ENCODE measurements at regions of chr17 and their contacts with region 1.

Region 1: DNA sequence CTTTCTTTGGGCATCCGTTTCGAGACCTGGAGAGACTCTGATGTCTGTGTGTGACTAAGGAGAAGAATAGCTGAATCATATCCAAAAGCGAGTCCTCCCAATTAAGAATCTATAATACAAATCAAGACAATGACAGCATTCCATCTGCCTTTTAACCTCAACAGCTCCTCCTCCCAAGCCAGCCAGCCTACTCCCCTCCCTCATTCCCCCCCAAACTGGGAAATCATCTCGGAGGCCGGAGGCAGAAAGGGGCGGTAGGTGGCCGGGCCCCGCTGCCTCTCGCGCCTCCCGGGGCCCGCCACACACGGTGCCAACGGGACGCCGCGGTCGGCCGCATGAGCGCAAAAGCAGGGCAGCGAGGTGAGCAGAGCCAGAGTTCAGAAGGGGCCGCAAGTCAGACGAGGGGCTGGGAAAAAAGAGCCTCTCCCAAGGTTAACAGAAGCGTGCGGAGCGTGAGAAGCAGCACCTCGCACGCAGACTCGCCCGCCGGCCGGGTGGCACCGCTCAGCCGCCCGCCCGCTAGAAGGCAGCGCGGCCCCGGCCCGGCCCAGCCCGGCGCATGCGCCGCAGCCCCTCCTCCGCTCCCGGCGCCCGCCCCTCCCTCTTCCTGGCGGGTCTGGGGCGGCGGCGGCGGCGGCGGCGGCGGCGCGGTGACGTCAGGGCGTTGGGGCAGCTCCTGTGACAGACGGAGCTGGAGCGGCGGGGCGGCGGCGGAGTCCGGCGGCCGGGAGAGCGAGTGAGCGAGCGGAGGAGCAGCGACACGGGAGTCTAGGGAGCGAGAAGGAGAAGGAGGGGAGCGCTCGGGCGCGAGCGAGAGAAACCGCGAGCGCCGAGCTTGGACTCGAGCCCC is at the start of gene PAFAH1B1:
- DNase-seq: peak; percentile 98
- ATAC-seq: peak; percentile 75
- H3K4me3 ChIP-seq: peak within 1 kb of the TSS; percentile 83 to 98 (median 93)
- H3K4me3 Mint-ChIP-seq: peak within 1 kb of the TSS; percentile 95
- H3K27ac ChIP-seq: peak within 1 kb of the TSS; percentile 94 to 97
- H3K27ac Mint-ChIP-seq: peak within 1 kb of the TSS; percentile 97
- H3K4me1 ChIP-seq: peaks cover 30 to 34% of the 10 kb centered on the region in 2 donors
- H3K4me1 Mint-ChIP-seq: peaks cover 33% of the 10 kb centered on the region
- H3K27me3 ChIP-seq: no peaks in the 10 kb centered on the region
- H3K27me3 Mint-ChIP-seq: no peaks in the 10 kb centered on the region
- CTCF ChIP-seq: peak; percentile 31
- total RNA-seq, gene PAFAH1B1: 170 and 172 TPM in 2 replicates

Region 2: DNA sequence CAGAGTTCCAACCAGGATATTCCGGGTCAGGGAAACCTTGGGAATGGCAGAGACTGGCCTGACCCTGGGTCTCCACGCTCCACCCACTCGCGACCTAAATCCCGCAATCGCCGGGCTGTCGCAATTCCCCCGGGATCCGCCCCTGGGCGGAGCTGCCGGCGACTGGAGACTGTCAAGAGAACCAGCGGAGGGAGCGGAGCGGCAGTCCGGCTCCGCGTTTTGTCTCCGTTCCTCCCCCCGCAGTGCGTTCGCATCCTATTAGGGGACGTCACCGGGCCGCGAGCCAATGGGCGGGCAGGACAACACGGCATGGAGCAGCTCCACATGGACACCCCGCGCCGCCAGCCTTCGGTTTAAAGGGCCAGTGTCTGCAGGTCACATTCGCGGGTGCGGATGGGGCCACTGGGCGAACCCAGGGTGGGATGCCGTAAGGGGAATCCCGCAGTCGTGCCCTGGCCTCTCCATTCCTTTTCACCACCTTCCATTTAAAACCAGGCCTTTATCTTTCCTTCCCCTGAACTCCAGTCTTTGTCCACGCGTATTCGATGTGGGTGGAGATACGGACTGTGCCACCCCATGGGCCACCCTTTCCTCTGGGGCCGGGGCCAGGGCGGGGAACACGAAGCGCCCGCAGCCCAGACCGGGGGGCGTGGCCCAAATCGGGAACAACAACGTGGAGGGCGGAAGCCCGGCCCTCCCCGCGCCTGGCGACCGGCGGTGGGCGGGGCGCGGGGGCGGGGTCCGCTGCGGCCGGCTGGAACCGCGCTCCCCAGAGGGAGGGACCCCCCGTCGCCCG is 191.6 kb before region 1 on chr17:
- CTCF ChIA-PET with region 1: interaction called, 3 read pairs
- POLR2A ChIA-PET with region 1: no interaction called
- intact Hi-C with region 1: loop called (anchors 2 kb)
- DNase-seq: peak; percentile 96
- ATAC-seq: peak; percentile 57
- H3K4me3 ChIP-seq: peak overlapping the region; percentile 64 to 99 (median 94)
- H3K4me3 Mint-ChIP-seq: peak overlapping the region; percentile 99
- H3K27ac ChIP-seq: peak overlapping the region; percentile 95 to 98
- H3K27ac Mint-ChIP-seq: peak overlapping the region; percentile 99
- H3K4me1 ChIP-seq: peaks cover 32 to 36% of the 10 kb centered on the region in 2 donors
- H3K4me1 Mint-ChIP-seq: peaks cover 38% of the 10 kb centered on the region
- H3K27me3 ChIP-seq: no peaks in the 10 kb centered on the region
- H3K27me3 Mint-ChIP-seq: no peaks in the 10 kb centered on the region
- CTCF ChIP-seq: no peak

Region 3: GRCh38 chr17:2580661-2581060 is 12.5 kb before region 1 on chr17:
- CTCF ChIA-PET with region 1: no interaction called
- POLR2A ChIA-PET with region 1: no interaction called
- intact Hi-C with region 1: no loop called
- DNase-seq: no peak
- ATAC-seq: no peak
- H3K4me3 ChIP-seq: no peak overlapping the region
- H3K4me3 Mint-ChIP-seq: no peak overlapping the region
- H3K27ac ChIP-seq: no peak overlapping the region
- H3K27ac Mint-ChIP-seq: no peak overlapping the region
- H3K4me1 ChIP-seq: no peaks in the 10 kb centered on the region
- H3K4me1 Mint-ChIP-seq: no peaks in the 10 kb centered on the region
- H3K27me3 ChIP-seq: peaks cover 0 to 4% (median 0%) of the 10 kb centered on the region in 4 experiments
- H3K27me3 Mint-ChIP-seq: peaks cover 9% of the 10 kb centered on the region
- CTCF ChIP-seq: no peak

Region 4: DNA sequence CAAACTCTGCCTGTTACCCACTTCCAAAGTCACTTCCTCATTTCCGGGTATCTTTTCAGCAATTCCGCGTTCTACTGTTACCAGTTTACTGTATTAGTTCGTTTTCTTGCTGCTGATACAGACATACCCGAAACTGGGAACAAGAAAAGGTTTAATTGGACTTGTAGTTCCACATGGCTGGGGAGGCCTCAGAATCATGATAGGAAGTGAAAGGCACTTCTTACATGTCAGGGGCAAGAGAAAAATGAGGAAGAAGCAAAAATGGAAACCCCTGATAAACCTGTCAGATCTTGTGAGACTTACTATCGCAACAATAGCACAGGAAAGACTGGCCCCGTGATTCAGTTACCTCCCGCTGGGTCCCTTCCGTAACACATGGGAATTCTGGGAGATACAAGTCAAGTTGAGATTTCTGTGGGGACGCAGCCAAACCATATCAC is 31.1 kb after region 1 on chr17:
- CTCF ChIA-PET with region 1: no interaction called
- POLR2A ChIA-PET with region 1: interaction called, 3 read pairs
- intact Hi-C with region 1: loop called (anchors 2 kb)
- DNase-seq: peak; percentile 82
- ATAC-seq: peak; percentile 76
- H3K4me3 ChIP-seq: peak overlapping the region in 3 of 5 experiments; percentile 33 to 46 (median 37)
- H3K4me3 Mint-ChIP-seq: peak overlapping the region; percentile 85
- H3K27ac ChIP-seq: peak overlapping the region; percentile 77 to 84
- H3K27ac Mint-ChIP-seq: peak overlapping the region; percentile 84
- H3K4me1 ChIP-seq: peaks cover 36 to 44% of the 10 kb centered on the region in 2 donors
- H3K4me1 Mint-ChIP-seq: peaks cover 71% of the 10 kb centered on the region
- H3K27me3 ChIP-seq: no peaks in the 10 kb centered on the region
- H3K27me3 Mint-ChIP-seq: no peaks in the 10 kb centered on the region
- CTCF ChIP-seq: no peak

Region 5: GRCh38 chr17:2711601-2712299 is 118.6 kb after region 1 on chr17 and contains the start of gene CLUH:
- CTCF ChIA-PET with region 1: no interaction called
- POLR2A ChIA-PET with region 1: no interaction called
- intact Hi-C with region 1: loop called (anchors 1 kb)
- DNase-seq: peak; percentile 98
- ATAC-seq: peak; percentile 88
- H3K4me3 ChIP-seq: peak within 1 kb of the TSS; percentile 22 to 95 (median 58)
- H3K4me3 Mint-ChIP-seq: peak within 1 kb of the TSS; percentile 93
- H3K27ac ChIP-seq: peak within 1 kb of the TSS; percentile 46 to 69
- H3K27ac Mint-ChIP-seq: peak within 1 kb of the TSS; percentile 90
- H3K4me1 ChIP-seq: peaks cover 29 to 50% of the 10 kb centered on the region in 2 donors
- H3K4me1 Mint-ChIP-seq: peaks cover 39% of the 10 kb centered on the region
- H3K27me3 ChIP-seq: no peaks in the 10 kb centered on the region
- H3K27me3 Mint-ChIP-seq: no peaks in the 10 kb centered on the region
- CTCF ChIP-seq: no peak
- total RNA-seq, gene CLUH: 53.1 and 78.8 TPM in 2 replicates

Measured in B cell (primary cell).